GM23248 (cell line): ENCODE measurements at regions of chr16 and their contacts with region 1.

Region 1: DNA sequence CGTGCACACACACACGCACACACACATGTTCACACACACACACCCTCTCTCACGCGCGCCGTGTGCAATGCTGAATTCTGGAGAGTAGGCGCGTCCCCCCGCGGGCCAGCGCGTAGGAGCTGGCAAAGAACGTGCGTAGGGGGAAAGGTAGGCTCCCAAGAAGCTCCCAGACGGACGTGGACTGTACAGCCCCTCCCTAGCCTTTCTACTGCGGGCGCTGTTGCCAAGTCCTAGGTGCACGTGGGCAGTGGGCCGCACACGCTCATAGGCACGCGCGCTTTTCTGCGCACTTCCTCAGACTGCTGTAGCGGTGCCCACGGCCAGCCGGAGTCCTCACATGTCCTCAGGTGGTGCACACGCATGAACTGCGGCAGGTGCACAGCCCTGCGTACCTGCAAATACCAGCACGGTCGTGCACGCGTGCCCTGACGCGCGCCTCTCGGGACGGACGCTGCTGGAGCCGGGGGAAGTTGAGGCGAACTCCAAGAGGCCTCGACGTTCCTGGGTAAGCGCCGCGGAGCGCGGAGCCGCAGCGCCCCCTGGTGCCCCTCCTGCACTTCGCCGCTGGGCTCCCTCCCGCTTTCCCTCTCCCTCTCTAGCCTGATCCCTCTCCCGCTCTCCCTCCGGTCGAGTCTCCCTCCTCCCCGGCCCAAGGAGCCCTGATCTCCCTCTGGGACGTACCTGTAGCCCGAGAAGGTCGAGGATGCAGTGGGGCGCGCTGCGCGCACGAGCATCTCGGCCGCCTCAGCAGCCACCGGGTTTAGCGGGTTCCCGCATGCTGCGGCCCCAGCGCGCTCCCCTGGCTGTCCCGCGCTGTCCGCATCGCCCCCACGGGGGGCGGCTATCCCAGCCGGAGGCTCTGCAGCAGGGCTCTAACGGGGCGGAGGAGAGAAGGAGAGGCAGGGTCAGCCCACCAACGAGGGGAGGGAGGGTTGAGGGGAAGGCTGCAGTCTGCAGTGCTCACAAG is 749 bp downstream of the GRIN2A start:
- DNase-seq: peak; percentile 68
- H3K4me3 ChIP-seq: no peak overlapping the region
- H3K27ac ChIP-seq: no peak overlapping the region
- H3K4me1 ChIP-seq: no peaks in the 10 kb centered on the region
- H3K27me3 ChIP-seq: peaks cover 23% of the 10 kb centered on the region

Region 2: GRCh38 chr16:8567750-8568617 is 1613.5 kb before region 1 on chr16:
- in situ Hi-C with region 1: loop called (anchors 25 kb)
- DNase-seq: peak; percentile 96
- H3K4me3 ChIP-seq: no peak overlapping the region
- H3K27ac ChIP-seq: no peak overlapping the region
- H3K4me1 ChIP-seq: peaks cover 9% of the 10 kb centered on the region
- H3K27me3 ChIP-seq: no peaks in the 10 kb centered on the region

Region 3: DNA sequence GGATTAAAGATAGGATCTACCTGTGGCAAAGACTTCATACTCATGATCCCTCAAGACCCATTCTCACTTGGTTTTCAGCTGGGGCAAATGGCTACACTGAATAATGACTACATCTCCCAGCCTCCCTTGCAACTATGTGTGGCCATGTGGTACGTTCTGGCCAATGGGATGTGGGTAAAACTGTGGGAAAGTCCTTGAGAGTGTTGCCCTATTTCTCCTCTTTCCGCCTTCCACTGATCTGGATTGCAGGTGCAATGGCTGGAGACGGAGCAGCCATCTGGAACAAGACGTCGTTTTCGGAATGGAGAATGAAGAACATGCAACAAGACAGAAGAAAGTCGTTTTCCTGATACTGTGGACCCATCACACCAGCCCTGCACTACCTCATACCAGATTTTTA is 1041.5 kb before region 1 on chr16:
- in situ Hi-C with region 1: loop called (anchors 10 kb)
- DNase-seq: peak; percentile 56
- H3K4me3 ChIP-seq: no peak overlapping the region
- H3K27ac ChIP-seq: no peak overlapping the region
- H3K4me1 ChIP-seq: no peaks in the 10 kb centered on the region
- H3K27me3 ChIP-seq: no peaks in the 10 kb centered on the region